ENCODE measurements at regions of chr3 and their contacts with region 1.

Region 1: GRCh38 chr3:195850857-195851543 is 39.3 kb upstream of the MUC4 start:
- DNase-seq: peak; percentile 94
- H3K4me3 Mint-ChIP-seq: no peak overlapping the region
- H3K27ac Mint-ChIP-seq: no peak overlapping the region
- H3K4me1 Mint-ChIP-seq: peaks cover 20% of the 10 kb centered on the region
- H3K27me3 Mint-ChIP-seq: peaks cover 14% of the 10 kb centered on the region

Region 2: DNA sequence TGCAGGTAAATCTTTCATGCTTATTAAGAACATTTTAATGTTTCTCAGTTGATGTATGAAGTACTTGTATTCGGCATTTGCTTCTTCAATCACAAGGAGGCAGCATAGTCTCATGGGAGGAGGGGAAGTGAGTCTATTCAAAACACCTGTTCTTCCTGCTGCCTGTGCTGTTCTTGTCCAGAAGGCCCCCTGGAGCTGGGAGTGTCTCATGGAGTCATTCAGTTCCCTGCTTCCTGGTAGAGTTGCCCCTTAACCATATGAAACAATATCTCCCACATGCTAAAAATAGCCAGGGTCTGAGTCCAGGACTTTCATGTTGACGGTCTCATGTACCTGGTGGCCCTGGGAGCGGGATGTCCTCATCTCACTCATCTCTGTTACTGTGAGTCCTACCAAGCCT is 292.4 kb before region 1 on chr3:
- CTCF ChIA-PET with region 1: interaction called, 18 read pairs
- DNase-seq: peak; percentile 63
- H3K4me3 Mint-ChIP-seq: no peak overlapping the region
- H3K27ac Mint-ChIP-seq: no peak overlapping the region
- H3K4me1 Mint-ChIP-seq: peaks cover 35% of the 10 kb centered on the region
- H3K27me3 Mint-ChIP-seq: peaks cover 4% of the 10 kb centered on the region

Region 3: GRCh38 chr3:195829897-195830254 is 21.1 kb before region 1 on chr3:
- CTCF ChIA-PET with region 1: interaction called, 10 read pairs
- DNase-seq: no peak
- H3K4me3 Mint-ChIP-seq: no peak overlapping the region
- H3K27ac Mint-ChIP-seq: no peak overlapping the region
- H3K4me1 Mint-ChIP-seq: no peaks in the 10 kb centered on the region
- H3K27me3 Mint-ChIP-seq: peaks cover 10% of the 10 kb centered on the region

Region 4: GRCh38 chr3:195839282-195840010 is 11.6 kb before region 1 on chr3:
- CTCF ChIA-PET with region 1: interaction called, 14 read pairs
- DNase-seq: no peak
- H3K4me3 Mint-ChIP-seq: no peak overlapping the region
- H3K27ac Mint-ChIP-seq: no peak overlapping the region
- H3K4me1 Mint-ChIP-seq: no peaks in the 10 kb centered on the region
- H3K27me3 Mint-ChIP-seq: peaks cover 29% of the 10 kb centered on the region

Region 5: DNA sequence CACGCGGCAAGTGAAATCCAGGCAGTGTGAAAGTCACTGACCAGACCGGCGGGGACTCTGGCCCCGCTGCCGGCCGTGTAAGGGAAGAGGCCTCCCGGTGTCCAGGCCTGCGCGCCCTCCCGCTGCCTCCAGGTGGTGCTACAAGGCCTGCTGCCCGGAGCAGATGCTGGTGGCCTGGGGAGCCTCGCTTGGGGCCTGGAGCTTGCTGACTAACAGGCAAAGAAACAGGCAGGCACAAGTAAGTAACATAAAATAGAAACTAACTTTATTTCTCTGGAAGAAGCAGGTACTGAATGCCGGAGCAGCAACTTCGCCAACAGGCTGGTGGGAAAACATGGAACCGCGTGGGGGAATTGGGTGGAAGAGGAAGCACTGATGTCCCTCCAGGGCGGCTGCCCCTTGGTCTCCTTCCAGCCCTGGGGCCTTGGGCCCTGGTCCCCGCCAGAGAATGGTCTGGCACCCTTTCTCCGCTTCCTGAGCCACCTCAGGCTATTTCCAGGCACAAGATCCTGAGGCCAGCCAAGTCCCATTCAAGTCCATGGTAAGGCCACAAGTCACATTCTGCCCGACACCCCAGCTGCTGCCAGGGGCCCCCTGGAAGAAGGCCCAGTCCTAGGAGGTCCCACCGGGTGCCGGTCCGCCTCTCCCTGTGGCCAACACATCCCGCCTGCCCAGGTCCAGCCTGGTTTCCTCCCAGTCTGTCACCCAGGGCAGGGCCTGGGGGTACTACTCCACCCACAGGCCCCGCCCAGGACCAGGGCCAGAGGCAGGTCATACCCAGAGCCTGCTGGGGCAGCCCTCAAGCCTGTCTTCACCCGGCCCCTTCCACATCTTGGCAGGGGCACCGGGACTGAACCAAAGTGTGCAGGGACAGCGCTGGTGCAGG is 12.4 kb after region 1 on chr3:
- CTCF ChIA-PET with region 1: interaction called, 12 read pairs
- DNase-seq: peak; percentile 73
- H3K4me3 Mint-ChIP-seq: no peak overlapping the region
- H3K27ac Mint-ChIP-seq: peak overlapping the region; percentile 60
- H3K4me1 Mint-ChIP-seq: peaks cover 5% of the 10 kb centered on the region
- H3K27me3 Mint-ChIP-seq: peaks cover 15% of the 10 kb centered on the region

Region 6: GRCh38 chr3:195894780-195895607 is 44.0 kb after region 1 on chr3:
- CTCF ChIA-PET with region 1: interaction called, 18 read pairs
- DNase-seq: peak; percentile 76
- H3K4me3 Mint-ChIP-seq: peak overlapping the region; percentile 87
- H3K27ac Mint-ChIP-seq: peak overlapping the region; percentile 92
- H3K4me1 Mint-ChIP-seq: peaks cover 47% of the 10 kb centered on the region
- H3K27me3 Mint-ChIP-seq: no peaks in the 10 kb centered on the region

Region 7: GRCh38 chr3:195909644-195910508 is 58.9 kb after region 1 on chr3:
- CTCF ChIA-PET with region 1: interaction called, 15 read pairs
- DNase-seq: peak; percentile 92
- H3K4me3 Mint-ChIP-seq: peak overlapping the region; percentile 73
- H3K27ac Mint-ChIP-seq: peak overlapping the region; percentile 86
- H3K4me1 Mint-ChIP-seq: peaks cover 43% of the 10 kb centered on the region
- H3K27me3 Mint-ChIP-seq: peaks cover 9% of the 10 kb centered on the region

Region 8: DNA sequence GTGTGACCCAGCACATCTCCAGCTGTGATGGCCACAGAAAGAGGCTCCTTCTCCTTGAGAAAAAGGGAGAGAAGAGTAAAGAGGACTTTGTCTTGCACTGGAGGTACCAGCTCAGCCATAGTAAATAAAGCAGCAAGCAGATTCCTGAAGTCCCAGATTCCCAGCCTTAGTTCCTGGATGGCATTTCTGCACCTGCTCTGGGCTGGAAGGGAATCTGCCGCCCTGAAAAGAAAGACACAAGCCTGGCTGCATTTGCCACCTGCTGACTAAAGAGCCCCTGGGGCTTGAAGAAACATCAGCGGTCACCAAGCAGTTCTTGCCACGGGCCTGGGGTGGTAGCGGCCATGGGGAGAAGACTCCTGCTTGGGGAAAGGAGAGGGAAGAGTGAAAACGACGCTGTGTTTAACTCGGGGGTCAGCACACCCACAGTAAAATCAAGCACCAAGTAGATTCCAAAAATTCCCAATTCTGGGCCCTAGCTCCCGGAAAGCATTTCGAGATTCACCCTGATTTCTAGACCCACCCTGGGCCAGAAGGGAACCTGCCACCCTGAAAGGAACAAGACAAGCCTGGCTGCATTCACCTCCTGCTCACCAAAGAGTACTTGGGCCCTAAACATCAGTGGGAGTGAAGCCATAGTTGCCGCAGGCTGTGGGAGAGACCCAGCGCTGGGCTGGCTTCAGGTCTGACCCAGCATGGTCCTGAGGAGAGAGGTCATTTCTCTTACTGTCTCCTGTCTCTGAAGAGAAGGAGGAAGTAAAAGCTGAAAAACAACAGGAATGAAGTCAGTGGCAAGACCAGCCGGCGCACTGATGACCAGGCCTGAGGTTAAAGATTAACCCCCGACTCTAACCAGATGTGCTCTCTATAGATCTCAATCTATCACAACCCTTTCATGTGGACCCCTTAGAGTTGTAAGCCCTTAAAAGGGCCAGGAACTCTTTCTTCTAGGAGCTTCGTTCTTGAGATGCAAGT is 81.7 kb after region 1 on chr3:
- CTCF ChIA-PET with region 1: no interaction called
- DNase-seq: no peak
- H3K4me3 Mint-ChIP-seq: no peak overlapping the region
- H3K27ac Mint-ChIP-seq: no peak overlapping the region
- H3K4me1 Mint-ChIP-seq: no peaks in the 10 kb centered on the region
- H3K27me3 Mint-ChIP-seq: no peaks in the 10 kb centered on the region